ENCODE measurements at regions of chr1 and their contacts with region 1.

Region 1: DNA sequence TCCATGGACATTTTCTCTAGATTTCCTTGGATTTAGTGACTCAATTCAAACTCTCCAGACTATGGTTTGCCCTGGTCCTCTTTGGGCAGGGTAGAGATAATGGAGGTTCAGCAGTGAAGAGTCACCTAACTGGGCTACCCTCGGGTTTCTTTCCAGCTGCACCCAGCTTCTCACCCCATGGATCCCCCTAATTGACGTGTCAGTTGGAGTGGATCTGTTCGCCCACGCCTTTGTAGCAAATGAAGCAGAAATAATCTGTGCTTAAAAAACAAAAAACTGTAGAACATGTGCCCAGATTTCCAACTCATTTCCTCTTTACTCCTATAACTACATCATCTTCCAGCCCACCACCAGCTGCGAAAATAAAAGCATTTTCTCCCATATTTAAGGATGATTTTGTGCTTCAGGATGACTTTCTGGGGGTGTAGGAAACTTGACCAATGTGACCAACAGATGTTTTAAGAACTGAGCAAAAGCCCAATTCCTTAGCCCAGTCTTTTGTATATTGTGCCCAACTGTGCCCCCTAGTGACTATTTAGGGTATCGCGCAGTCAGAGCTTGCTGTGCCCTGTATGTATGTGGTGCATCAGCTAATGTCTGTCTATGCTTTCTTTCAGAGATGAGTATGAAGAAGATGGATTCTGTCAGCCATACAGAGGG is 66.5 kb upstream of the UBE2U start:
- DNase-seq: peak; percentile 85
- H3K4me3 Mint-ChIP-seq: no peak overlapping the region
- H3K27ac Mint-ChIP-seq: peak overlapping the region; percentile 27
- H3K4me1 Mint-ChIP-seq: peaks cover 23% of the 10 kb centered on the region
- H3K27me3 Mint-ChIP-seq: no peaks in the 10 kb centered on the region
- CTCF ChIP-seq: peak; percentile 77

Region 2: DNA sequence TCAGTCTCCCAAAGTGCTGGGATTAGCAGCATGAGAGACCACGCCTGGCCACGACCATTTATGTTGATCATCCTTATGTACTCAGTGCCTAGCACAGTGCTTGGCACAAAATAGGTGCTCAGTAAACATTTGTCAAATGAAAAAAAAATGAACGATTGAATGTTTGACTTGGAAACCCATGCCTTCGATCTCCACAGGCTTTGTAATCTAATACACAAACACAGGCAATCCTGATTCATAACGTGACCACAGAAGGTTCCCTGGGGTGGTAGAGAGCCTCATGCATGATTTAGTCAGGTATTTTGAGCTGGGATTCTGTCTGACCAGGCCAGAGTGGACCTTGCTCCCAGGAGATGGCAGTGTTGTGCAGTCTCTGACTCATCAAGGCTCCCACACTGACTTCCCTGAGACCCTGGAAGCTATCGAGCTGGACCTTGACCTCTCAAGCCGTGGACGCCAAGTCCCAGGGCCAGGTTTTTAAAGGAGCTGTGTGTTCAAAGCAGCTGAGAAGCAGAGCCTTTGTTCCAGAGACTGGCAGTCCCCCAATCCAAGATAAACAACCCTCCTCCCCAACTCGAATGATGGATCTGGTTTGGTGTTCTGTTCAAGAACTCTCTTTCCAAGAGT is 462.5 kb before region 1 on chr1:
- CTCF ChIA-PET with region 1: interaction called, 6 read pairs
- POLR2A ChIA-PET with region 1: interaction called, 3 read pairs
- intact Hi-C with region 1: loop called (anchors 1 kb)
- DNase-seq: peak; percentile 90
- H3K4me3 Mint-ChIP-seq: no peak overlapping the region
- H3K27ac Mint-ChIP-seq: no peak overlapping the region
- H3K4me1 Mint-ChIP-seq: peaks cover 11% of the 10 kb centered on the region
- H3K27me3 Mint-ChIP-seq: no peaks in the 10 kb centered on the region
- CTCF ChIP-seq: peak; percentile 58

Region 3: GRCh38 chr1:63779338-63780211 is 357.3 kb before region 1 on chr1:
- CTCF ChIA-PET with region 1: interaction called, 16 read pairs
- POLR2A ChIA-PET with region 1: interaction called, 7 read pairs
- intact Hi-C with region 1: loop called (anchors 1 kb)
- DNase-seq: no peak
- H3K4me3 Mint-ChIP-seq: no peak overlapping the region
- H3K27ac Mint-ChIP-seq: no peak overlapping the region
- H3K4me1 Mint-ChIP-seq: peaks cover 9% of the 10 kb centered on the region
- H3K27me3 Mint-ChIP-seq: no peaks in the 10 kb centered on the region
- CTCF ChIP-seq: no peak

Region 4: GRCh38 chr1:63935143-63935542 is 201.7 kb before region 1 on chr1:
- CTCF ChIA-PET with region 1: interaction called, 60 read pairs
- POLR2A ChIA-PET with region 1: no interaction called
- intact Hi-C with region 1: loop called (anchors 1 kb)
- DNase-seq: peak; percentile 53
- H3K4me3 Mint-ChIP-seq: no peak overlapping the region
- H3K27ac Mint-ChIP-seq: no peak overlapping the region
- H3K4me1 Mint-ChIP-seq: peaks cover 6% of the 10 kb centered on the region
- H3K27me3 Mint-ChIP-seq: no peaks in the 10 kb centered on the region
- CTCF ChIP-seq: peak; percentile 36

Region 5: GRCh38 chr1:64121766-64122385 is 15.0 kb before region 1 on chr1:
- CTCF ChIA-PET with region 1: interaction called, 15 read pairs
- POLR2A ChIA-PET with region 1: interaction called, 3 read pairs
- intact Hi-C with region 1: no loop called
- DNase-seq: no peak
- H3K4me3 Mint-ChIP-seq: no peak overlapping the region
- H3K27ac Mint-ChIP-seq: no peak overlapping the region
- H3K4me1 Mint-ChIP-seq: no peaks in the 10 kb centered on the region
- H3K27me3 Mint-ChIP-seq: no peaks in the 10 kb centered on the region
- CTCF ChIP-seq: no peak

Region 6: GRCh38 chr1:64242895-64243756 is 106.2 kb after region 1 on chr1:
- CTCF ChIA-PET with region 1: interaction called, 9 read pairs
- POLR2A ChIA-PET with region 1: no interaction called
- intact Hi-C with region 1: loop called (anchors 1 kb)
- DNase-seq: peak; percentile 57
- H3K4me3 Mint-ChIP-seq: no peak overlapping the region
- H3K27ac Mint-ChIP-seq: no peak overlapping the region
- H3K4me1 Mint-ChIP-seq: no peaks in the 10 kb centered on the region
- H3K27me3 Mint-ChIP-seq: no peaks in the 10 kb centered on the region
- CTCF ChIP-seq: peak; percentile 38

Region 7: GRCh38 chr1:64881281-64881680 is 744.4 kb after region 1 on chr1:
- CTCF ChIA-PET with region 1: no interaction called
- POLR2A ChIA-PET with region 1: no interaction called
- intact Hi-C with region 1: no loop called
- DNase-seq: no peak
- H3K4me3 Mint-ChIP-seq: no peak overlapping the region
- H3K27ac Mint-ChIP-seq: no peak overlapping the region
- H3K4me1 Mint-ChIP-seq: no peaks in the 10 kb centered on the region
- H3K27me3 Mint-ChIP-seq: no peaks in the 10 kb centered on the region
- CTCF ChIP-seq: no peak